ENCODE measurements at regions of chr14 and their contacts with region 1.

Region 1: GRCh38 chr14:70649803-70650202 is 8.1 kb downstream of the TTC9 start:
- DNase-seq: no peak
- H3K4me3 ChIP-seq: no peak overlapping the region
- H3K27ac ChIP-seq: no peak overlapping the region
- H3K4me1 ChIP-seq: peaks cover 8% of the 10 kb centered on the region
- H3K27me3 ChIP-seq: no peaks in the 10 kb centered on the region
- CTCF ChIP-seq: no peak

Region 2: GRCh38 chr14:70576891-70577290 is 72.9 kb before region 1 on chr14:
- CTCF ChIA-PET with region 1: no interaction called
- POLR2A ChIA-PET with region 1: interaction called, 12 read pairs
- intact Hi-C with region 1: no loop called
- DNase-seq: no peak
- H3K4me3 ChIP-seq: no peak overlapping the region
- H3K27ac ChIP-seq: no peak overlapping the region
- H3K4me1 ChIP-seq: no peaks in the 10 kb centered on the region
- H3K27me3 ChIP-seq: no peaks in the 10 kb centered on the region
- CTCF ChIP-seq: no peak

Region 3: DNA sequence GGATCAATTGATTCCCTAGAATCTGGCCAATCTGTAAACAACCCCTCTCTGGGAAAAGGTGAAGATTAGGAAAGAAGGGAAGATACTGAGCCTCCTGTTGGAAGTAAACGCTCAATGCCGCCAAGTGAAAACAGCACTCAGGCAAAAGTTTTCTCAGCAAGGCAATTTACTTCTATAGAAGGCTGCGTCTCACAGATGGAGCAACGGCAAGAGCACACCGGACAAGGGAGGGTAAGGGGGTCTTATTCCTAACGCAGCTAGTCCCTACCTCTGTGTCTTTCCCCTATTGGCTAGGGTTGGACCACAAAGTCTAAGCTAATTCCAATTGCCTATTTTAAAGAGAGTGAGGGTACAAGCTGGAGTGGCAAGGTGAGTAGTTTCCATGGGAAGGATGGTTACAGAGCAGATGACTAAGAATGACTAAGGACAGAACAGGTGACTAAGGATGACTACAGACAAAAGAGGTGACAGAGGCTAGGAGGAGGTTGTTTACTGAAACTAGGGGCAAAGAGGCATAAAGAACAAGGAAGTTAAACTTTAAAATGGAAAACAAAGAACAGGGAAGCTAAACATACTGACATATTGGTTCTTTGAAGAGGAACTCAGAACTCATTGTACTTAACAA is 13.7 kb before region 1 on chr14:
- CTCF ChIA-PET with region 1: no interaction called
- POLR2A ChIA-PET with region 1: no interaction called
- intact Hi-C with region 1: no loop called
- DNase-seq: peak in 1 of 2 experiments; percentile 70
- H3K4me3 ChIP-seq: no peak overlapping the region
- H3K27ac ChIP-seq: peak overlapping the region; percentile 89
- H3K4me1 ChIP-seq: peaks cover 20% of the 10 kb centered on the region
- H3K27me3 ChIP-seq: no peaks in the 10 kb centered on the region
- CTCF ChIP-seq: no peak